ENCODE measurements at regions of chr20 and their contacts with region 1.

Region 1: GRCh38 chr20:37276494-37277252 is 12.8 kb upstream of the MANBAL start:
- DNase-seq: no peak
- H3K4me3 ChIP-seq: no peak overlapping the region
- H3K27ac ChIP-seq: no peak overlapping the region
- H3K4me1 ChIP-seq: peaks cover 0 to 13% (median 0%) of the 10 kb centered on the region in 4 experiments; a peak in 2 of 7 replicates
- H3K27me3 ChIP-seq: no peaks in the 10 kb centered on the region
- CTCF ChIP-seq: peak in 1 of 3 experiments; percentile 17; a peak in 1 of 4 replicates
- EP300 ChIP-seq: no peak
- POLR2A ChIP-seq: no peak
- RAD21 ChIP-seq: peak; percentile 22 to 23; a peak in 2 of 4 replicates

Region 2: GRCh38 chr20:37288091-37288490 is 11.4 kb after region 1 on chr20:
- CTCF ChIA-PET with region 1: interaction called, 91 read pairs
- POLR2A ChIA-PET with region 1: interaction called, 11 read pairs
- DNase-seq: no peak
- H3K4me3 ChIP-seq: no peak overlapping the region
- H3K27ac ChIP-seq: no peak overlapping the region
- H3K4me1 ChIP-seq: peaks cover 0 to 2% (median 0%) of the 10 kb centered on the region in 4 experiments; a peak in 3 of 7 replicates
- H3K27me3 ChIP-seq: 0 out of 7 replicates have a peak, but pooled peaks cover 0 to 4% (median 0%) of the 10 kb centered on the region in 4 experiments
- CTCF ChIP-seq: no peak
- EP300 ChIP-seq: no peak
- POLR2A ChIP-seq: no peak
- RAD21 ChIP-seq: no peak

Measured in H1 (cell line).